SK-N-SH (cell line): ENCODE measurements at regions of chr2 and their contacts with region 1.

Region 1: DNA sequence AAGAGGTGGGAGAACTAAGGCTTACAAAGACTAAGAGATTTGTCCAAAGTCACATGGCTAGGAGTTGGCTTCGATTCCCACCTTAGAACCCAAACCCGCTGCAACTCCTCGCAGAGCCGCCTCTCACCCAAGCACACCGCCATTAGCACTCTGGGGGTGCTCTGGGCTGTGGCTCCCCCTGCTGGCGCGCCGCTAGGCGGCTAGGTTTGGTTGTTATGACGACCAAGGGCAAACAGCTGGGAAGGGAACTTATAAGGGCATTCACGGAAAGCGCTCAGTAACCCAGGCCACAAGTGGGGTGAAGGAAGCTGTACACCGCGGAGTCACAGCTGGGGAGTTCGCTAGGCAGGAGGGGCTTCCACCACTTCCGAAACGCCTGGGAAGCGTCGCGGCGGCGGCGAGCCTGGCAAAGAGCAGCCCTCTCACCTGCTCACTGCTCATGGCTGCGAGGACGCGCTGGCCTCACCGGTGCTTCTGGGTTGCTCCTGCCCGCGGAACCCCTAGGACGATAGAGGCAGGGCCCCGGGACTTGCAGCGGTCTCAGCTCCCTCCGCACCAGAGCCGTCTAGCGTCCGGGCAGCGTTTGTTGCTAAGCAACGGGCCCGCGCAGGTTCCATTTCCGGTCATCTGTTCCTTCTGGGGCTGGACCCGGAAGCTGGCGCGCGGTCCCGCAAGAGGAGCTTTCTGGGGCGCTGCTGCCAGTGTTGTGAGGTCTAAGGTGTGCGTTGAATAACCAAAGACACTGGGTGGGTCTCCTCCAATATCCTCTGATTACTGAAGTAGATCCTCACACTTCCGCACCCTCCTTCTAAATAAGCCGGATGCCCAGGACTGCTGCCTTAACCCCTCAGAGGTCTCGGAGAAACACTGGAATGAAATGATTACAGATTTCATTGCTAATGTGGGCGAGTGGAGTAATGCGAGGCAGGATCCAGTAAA is at the start of gene DNAH7:
- DNase-seq: peak; percentile 87
- H3K4me3 ChIP-seq: peak within 1 kb of the TSS; percentile 72 to 98
- H3K27ac ChIP-seq: peak within 1 kb of the TSS; percentile 78 to 80
- H3K4me1 ChIP-seq: peaks cover 0 to 5% of the 10 kb centered on the region in 2 experiments; a peak in 2 of 4 replicates
- H3K27me3 ChIP-seq: no peaks in the 10 kb centered on the region
- CTCF ChIP-seq: peak; percentile 79
- EP300 ChIP-seq: no peak
- RAD21 ChIP-seq: peak; percentile 60
- polyA plus RNA-seq, gene DNAH7: 0.70 and 1.2 TPM in 2 replicates

Region 2: DNA sequence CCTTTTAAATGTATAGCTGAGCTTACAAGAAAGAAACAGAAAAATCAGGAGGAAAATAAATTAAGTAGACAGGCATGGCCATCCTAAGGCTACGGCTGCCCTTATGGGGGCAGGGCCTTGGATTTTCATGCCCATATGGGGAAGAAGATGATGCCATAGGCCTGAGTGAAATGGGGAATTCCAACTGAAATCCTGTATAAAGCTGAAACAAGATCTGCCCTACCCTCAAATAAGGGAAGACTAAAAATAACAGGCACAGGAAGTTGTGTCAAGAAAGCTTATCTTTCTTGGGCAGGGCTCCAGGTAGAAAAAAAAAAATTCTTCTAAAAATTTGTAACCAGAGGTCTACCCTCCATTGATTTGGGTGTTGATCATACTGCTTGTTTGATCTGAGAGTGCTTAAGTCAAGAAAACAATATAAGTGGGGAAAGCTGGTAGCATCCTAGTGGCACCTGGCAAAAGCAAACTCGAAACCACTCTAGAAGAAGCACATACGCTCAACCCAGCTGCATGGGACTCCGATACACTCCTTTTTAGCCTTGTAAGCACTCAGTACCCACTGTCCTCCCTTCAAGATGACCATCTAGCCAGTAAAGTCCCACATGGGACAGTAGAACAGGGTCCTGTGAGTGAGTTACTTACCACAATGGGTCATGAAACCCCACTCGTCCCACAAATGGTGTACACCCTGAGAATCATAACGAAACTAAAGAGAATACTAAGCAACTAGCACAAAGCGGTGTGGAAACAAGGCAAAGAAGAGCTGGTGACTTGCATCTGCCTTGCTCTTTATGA is 22.2 kb before region 1 on chr2:
- CTCF ChIA-PET with region 1: interaction called, 11 read pairs
- POLR2A ChIA-PET with region 1: no interaction called
- DNase-seq: no peak
- H3K4me3 ChIP-seq: no peak overlapping the region
- H3K27ac ChIP-seq: no peak overlapping the region
- H3K4me1 ChIP-seq: no peaks in the 10 kb centered on the region
- H3K27me3 ChIP-seq: no peaks in the 10 kb centered on the region
- CTCF ChIP-seq: no peak
- EP300 ChIP-seq: no peak
- RAD21 ChIP-seq: no peak

Region 3: DNA sequence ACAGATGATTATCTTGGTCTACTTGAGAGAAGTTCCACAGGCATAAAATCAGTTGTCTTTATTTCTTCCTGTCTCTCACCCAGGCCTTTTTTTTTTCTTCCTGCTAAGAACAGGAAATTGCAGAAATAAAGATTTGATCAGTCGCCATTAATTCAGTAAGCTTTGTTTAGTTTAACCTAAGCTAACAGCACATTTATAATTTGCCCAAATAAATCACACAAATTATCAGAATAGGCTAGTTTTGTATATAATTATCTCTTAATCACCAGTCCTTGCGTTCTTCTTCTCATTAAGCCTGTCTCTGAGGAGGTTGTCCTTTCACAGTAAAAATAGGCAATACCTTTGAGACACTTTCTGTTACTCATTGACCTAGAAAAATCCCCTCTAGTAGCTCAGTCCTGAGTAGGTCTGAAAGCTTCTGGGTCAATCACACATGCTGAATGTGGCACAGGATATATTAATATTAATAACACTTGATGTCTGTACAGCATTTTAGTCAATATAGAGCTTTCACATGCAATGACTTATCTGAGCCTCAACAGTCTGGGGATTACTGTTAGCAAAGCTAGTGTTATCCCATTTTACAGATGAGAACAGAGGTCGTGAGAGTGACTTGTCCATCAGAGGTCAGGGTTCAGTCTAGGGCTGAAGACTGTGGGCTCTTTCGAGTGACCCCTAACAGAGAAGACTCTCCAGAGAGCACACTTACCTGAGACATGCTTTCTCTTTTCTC is 114.1 kb after region 1 on chr2:
- CTCF ChIA-PET with region 1: no interaction called
- POLR2A ChIA-PET with region 1: no interaction called
- DNase-seq: no peak
- H3K4me3 ChIP-seq: no peak overlapping the region
- H3K27ac ChIP-seq: no peak overlapping the region
- H3K4me1 ChIP-seq: no peaks in the 10 kb centered on the region
- H3K27me3 ChIP-seq: no peaks in the 10 kb centered on the region
- CTCF ChIP-seq: no peak
- EP300 ChIP-seq: no peak
- RAD21 ChIP-seq: no peak